Activated T-helper 2 cell treated with anti-CD3 and anti-CD28 coated beads, Interferon-gamma antibody, Interleukin-2, Interleukin-4, amounts not matched to agents 10 μg/mL and 5 μg/mL and 100 μg/mL, durations not matched to agents 14 hours and 24 hours and 36 hours (primary cell): ENCODE measurements at regions of chr11 and their contacts with region 1.

Region 1: DNA sequence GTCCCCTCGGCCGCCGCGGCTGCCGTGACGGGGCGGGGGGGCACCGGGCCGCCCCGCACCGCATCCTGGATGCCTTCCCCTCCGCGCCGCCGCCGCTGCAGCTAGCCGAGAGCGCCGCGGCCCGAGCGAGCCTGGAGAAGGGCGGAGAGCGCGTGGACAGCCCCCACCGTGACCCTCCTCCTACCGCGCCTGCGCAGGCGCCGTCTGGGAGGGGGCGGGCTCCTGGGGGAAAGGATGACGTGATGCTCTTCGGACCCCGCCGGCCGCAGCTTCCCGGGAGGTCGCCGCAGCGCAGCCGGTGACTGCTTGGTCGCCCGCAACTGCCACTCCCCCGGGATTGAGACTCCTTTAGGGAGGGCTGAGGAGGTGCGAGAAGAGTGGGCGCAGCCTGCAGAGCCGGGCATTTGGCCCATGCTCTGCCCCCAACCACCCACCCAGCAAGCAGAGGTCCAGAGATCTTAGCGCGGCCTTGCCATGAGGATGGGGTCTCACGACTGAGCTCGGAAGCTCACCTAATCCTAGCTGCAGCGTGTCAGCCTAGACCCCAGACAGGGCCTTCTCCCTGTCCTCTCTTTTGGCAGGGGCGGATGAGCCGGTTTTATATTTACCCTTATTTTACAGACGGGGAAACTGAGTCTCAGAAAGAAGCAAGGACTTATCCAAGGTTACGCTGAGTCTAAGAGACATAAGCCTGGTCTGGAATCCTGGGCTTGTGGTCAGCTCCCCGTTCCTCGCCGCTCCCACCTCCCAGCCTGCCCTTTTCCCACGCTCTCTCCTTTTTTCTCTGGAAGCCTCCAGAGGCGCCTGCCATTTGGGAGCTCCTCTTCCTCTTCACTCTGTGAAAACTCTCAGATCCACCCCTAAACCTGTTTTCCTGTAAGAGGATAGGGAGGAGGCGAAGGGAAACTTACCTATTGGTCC is at the start of gene DENND5A:
- DNase-seq: peak; percentile 39
- H3K4me3 Mint-ChIP-seq: peak within 1 kb of the TSS; percentile 86
- H3K27ac Mint-ChIP-seq: peak within 1 kb of the TSS; percentile 93
- H3K4me1 Mint-ChIP-seq: peaks cover 33% of the 10 kb centered on the region
- H3K27me3 Mint-ChIP-seq: peaks cover 31% of the 10 kb centered on the region
- total RNA-seq, gene DENND5A: 56.7 and 61.6 TPM in 2 replicates

Region 2: GRCh38 chr11:9210922-9211320 is 54.5 kb before region 1 on chr11:
- intact Hi-C with region 1: loop called (anchors 1 kb)
- DNase-seq: no peak
- H3K4me3 Mint-ChIP-seq: no peak overlapping the region
- H3K27ac Mint-ChIP-seq: peak overlapping the region; percentile 80
- H3K4me1 Mint-ChIP-seq: peaks cover 75% of the 10 kb centered on the region
- H3K27me3 Mint-ChIP-seq: no peaks in the 10 kb centered on the region

Region 3: DNA sequence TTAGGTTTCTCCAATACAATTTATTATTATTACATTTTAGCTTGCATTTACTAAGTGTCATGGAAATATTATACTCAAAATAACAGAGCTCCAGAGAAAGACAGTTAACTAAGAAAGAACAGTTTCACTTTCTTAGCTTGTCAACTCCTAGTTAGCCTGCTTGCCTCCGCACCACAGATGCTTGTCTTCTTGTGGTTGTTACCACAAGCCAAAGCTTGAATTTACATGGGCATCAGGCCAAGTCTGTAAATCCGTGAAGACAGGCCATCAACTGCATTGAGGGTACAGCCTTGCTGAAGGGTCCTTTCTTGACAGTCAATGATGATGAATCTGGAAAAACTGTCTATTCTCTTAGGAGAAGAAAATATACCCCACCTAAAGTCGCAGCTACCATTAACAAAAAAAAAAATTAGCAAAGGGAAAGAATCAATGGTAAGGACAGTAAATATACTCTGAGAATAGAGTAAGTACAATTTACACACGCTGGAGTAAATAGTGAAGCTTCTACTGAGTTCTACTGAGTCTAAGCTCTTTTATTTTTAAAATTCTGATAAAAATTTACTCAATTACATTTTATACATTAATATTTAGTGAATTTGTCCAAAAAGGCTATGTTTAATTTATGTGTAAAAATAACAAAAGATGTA is 15.3 kb after region 1 on chr11:
- intact Hi-C with region 1: loop called (anchors 1 kb)
- DNase-seq: peak; percentile 71
- H3K4me3 Mint-ChIP-seq: peak overlapping the region; percentile 56
- H3K27ac Mint-ChIP-seq: peak overlapping the region; percentile 40
- H3K4me1 Mint-ChIP-seq: peaks cover 17% of the 10 kb centered on the region
- H3K27me3 Mint-ChIP-seq: no peaks in the 10 kb centered on the region

Region 4: GRCh38 chr11:9363954-9364912 is 98.8 kb after region 1 on chr11:
- intact Hi-C with region 1: loop called (anchors 5 kb)
- DNase-seq: peak; percentile 72
- H3K4me3 Mint-ChIP-seq: peak overlapping the region; percentile 73
- H3K27ac Mint-ChIP-seq: peak overlapping the region; percentile 84
- H3K4me1 Mint-ChIP-seq: peaks cover 27% of the 10 kb centered on the region
- H3K27me3 Mint-ChIP-seq: no peaks in the 10 kb centered on the region

Region 5: DNA sequence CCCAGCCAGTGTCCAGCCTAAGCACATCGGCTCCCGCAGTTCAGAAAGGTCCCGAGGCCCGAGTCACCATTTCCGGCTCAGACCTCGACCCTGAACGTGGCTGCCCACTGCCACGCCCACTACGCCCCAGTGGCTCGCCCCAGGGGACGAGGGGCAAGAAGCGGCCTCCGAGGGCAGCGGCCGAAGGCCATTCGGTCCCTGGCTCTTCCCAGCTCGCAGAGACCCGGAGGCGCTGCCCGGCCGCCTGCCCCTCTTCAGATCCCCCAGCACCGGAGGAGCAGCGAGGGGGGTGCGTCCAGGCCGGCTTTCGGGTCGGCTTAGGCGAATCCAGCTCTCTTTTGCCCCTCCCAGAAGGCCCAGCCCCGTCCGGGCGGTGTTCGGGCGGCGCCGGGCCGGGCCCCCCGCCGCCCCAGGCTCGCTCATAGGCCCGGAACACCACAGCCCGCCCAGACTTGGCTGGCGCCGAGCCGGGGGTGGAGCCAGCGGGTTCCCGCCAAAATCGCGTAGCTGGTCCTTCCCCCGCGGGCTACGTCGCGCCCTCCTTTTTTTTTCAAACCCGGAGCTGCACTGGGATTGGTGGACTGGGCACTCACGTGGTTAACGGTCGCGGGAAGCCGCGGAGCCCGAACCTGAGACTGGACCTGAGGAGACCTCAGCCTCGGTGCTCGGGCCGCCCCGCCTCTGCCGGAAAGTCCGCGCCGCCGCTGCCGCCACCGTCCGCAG is 307.7 kb after region 1 on chr11 and contains the start of gene WEE1:
- intact Hi-C with region 1: loop called (anchors 5 kb)
- DNase-seq: peak; percentile 98
- H3K4me3 Mint-ChIP-seq: peak within 1 kb of the TSS; percentile 91
- H3K27ac Mint-ChIP-seq: peak within 1 kb of the TSS; percentile 89
- H3K4me1 Mint-ChIP-seq: peaks cover 36% of the 10 kb centered on the region
- H3K27me3 Mint-ChIP-seq: peaks cover 2% of the 10 kb centered on the region
- total RNA-seq, gene WEE1: 48.6 and 49.6 TPM in 2 replicates

Region 6: DNA sequence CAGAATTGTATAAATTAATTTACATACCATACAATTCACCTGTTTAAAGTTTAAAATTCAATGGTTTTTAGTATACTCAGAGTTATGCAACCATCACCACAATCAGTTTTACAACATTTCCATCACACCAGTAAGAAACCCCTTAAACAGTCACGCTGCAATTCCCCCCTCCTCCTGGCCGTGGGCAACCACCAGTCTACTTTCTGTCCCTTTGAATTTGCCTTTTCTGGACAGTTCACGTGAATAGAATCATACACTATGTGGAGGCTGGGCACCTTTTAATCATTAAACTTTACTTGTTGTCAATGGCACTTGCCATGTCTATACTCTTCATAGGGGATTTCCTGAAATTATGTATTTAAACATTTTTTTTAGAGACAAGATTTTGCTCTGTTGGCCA is 378.3 kb after region 1 on chr11:
- intact Hi-C with region 1: no loop called
- DNase-seq: no peak
- H3K4me3 Mint-ChIP-seq: no peak overlapping the region
- H3K27ac Mint-ChIP-seq: no peak overlapping the region
- H3K4me1 Mint-ChIP-seq: peaks cover 4% of the 10 kb centered on the region
- H3K27me3 Mint-ChIP-seq: peaks cover 10% of the 10 kb centered on the region